PC-3 (cell line): ENCODE measurements at regions of chr18 and their contacts with region 1.

Region 1: GRCh38 chr18:32698153-32698552 is 74.7 kb downstream of the KLHL14 start:
- DNase-seq: no peak
- ATAC-seq: no peak
- H3K4me3 ChIP-seq: no peak overlapping the region
- H3K27ac ChIP-seq: no peak overlapping the region
- H3K4me1 ChIP-seq: no peaks in the 10 kb centered on the region; the same call in 1 of the 2 replicates
- H3K27me3 ChIP-seq: no peaks in the 10 kb centered on the region
- CTCF ChIP-seq: no peak

Region 2: DNA sequence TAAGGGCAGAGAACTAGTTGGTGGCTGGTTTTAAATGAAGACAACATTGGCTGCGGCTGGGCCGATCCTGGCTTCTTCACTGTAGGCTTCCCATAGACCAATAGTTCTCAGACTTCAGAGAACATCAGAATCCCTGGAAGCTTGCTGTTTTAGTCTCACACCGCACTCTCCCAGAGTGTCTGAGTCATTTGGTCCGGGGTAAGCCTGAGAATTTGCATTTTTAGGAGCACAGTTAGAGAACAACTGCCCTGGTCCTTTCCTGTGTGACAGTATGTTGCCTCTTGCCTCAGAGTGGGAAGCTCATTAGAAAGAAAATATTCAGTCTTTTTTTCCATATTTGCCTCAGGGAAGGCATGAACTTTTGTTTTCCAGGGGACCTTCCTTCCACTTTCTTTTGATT is 90.3 kb before region 1 on chr18:
- CTCF ChIA-PET with region 1: no interaction called
- POLR2A ChIA-PET with region 1: no interaction called
- intact Hi-C with region 1: no loop called
- DNase-seq: no peak
- ATAC-seq: no peak
- H3K4me3 ChIP-seq: no peak overlapping the region
- H3K27ac ChIP-seq: no peak overlapping the region
- H3K4me1 ChIP-seq: peaks cover 5% of the 10 kb centered on the region; the same call in 1 of the 2 replicates
- H3K27me3 ChIP-seq: no peaks in the 10 kb centered on the region
- CTCF ChIP-seq: no peak

Region 3: DNA sequence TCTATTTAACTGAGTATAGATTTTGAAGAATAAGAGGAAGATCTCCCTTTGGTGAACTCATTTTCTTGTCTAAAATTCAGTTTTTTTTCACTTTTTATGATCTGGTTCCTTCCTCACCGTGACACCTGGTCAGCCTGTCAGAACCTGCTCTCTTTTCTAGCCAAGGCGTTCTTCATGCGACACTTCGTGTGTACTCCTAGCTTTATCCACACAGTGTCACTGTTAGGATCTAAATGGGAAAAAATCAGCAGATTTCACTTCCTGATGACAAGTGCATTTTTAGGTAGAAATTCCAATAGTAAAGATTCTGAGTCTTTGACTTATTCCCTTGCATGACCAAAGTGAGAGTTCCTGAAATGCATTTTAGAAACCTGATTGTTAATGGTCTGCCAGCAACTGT is 15.1 kb before region 1 on chr18:
- CTCF ChIA-PET with region 1: no interaction called
- POLR2A ChIA-PET with region 1: interaction called, 22 read pairs
- intact Hi-C with region 1: no loop called
- DNase-seq: peak; percentile 2
- ATAC-seq: no peak
- H3K4me3 ChIP-seq: no peak overlapping the region
- H3K27ac ChIP-seq: no peak overlapping the region
- H3K4me1 ChIP-seq: no peaks in the 10 kb centered on the region
- H3K27me3 ChIP-seq: no peaks in the 10 kb centered on the region
- CTCF ChIP-seq: no peak

Region 4: DNA sequence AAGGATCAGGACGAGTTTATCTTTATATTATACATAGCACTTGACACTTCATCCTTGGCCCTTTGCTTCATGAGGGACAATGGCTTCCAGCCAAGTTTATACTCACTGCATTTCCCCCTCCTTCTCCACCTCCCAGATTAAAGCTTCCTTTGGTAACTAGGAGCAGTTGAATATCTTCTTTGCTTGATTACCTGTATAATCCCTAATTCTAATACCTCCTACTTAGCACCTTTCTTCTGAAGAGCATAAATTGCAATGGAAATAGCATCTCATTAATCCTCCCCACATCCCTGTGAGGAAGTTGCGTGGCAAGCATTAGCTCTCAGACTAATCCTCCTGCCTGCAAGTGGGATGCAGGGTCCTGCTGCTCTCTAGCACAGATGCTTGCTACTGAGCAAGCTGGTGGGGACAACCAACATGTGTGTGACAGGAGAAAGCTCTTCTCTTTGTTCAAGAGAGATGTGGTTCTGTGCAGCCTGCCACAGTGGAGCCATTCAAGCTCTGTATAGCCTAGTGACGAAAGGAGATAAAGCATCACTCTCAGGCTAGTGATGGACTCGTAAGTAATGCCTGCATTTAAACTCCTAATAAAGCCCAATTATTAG is 55.6 kb after region 1 on chr18:
- CTCF ChIA-PET with region 1: no interaction called
- POLR2A ChIA-PET with region 1: no interaction called
- intact Hi-C with region 1: no loop called
- DNase-seq: no peak
- ATAC-seq: no peak
- H3K4me3 ChIP-seq: no peak overlapping the region
- H3K27ac ChIP-seq: no peak overlapping the region
- H3K4me1 ChIP-seq: no peaks in the 10 kb centered on the region
- H3K27me3 ChIP-seq: no peaks in the 10 kb centered on the region
- CTCF ChIP-seq: no peak